HEK293 (cell line): ENCODE measurements at regions of chr17 and their contacts with region 1.

Region 1: GRCh38 chr17:37609170-37610040 is at the start of gene SYNRG:
- H3K4me3 ChIP-seq: peak within 1 kb of the TSS; percentile 74
- H3K27ac ChIP-seq: peak within 1 kb of the TSS; percentile 77
- H3K4me1 ChIP-seq: peaks cover 7% of the 10 kb centered on the region; the same call in 1 of the 2 replicates
- CTCF ChIP-seq: peak; percentile 69; the same call in 1 of the 2 replicates

Region 2: GRCh38 chr17:37643118-37643766 is 33.8 kb after region 1 on chr17 and contains the start of gene DDX52:
- CTCF ChIA-PET with region 1: interaction called, 3 read pairs
- POLR2A ChIA-PET with region 1: interaction called, 11 read pairs
- H3K4me3 ChIP-seq: peak within 1 kb of the TSS; percentile 75
- H3K27ac ChIP-seq: peak within 1 kb of the TSS; percentile 71
- H3K4me1 ChIP-seq: peaks cover 4% of the 10 kb centered on the region; the same call in 1 of the 2 replicates
- CTCF ChIP-seq: no peak; the same call in 1 of the 2 replicates